Calu3 (cell line): ENCODE measurements at regions of chr5 and their contacts with region 1.

Region 1: DNA sequence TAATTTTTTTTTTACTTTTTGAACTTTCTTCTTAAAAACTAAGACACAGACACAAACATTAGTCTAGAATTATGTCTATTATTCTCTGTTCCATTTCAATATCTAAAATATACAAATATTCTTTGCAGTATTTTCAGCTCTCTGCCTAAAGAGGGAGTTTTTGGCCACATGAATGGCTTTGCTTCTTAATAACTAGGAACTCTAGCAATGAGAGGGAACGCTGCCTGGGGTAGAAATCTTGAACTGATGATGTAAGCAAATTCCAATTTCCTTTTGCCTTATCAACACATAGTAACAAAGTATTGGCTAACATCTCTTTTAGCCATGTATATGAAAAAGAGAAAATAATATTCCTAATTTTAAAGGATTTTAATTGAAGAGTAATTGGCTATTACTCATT is 51.9 kb downstream of the SLC25A46 start:
- DNase-seq: no peak
- H3K4me3 Mint-ChIP-seq: no peak overlapping the region
- H3K27ac Mint-ChIP-seq: no peak overlapping the region
- H3K4me1 Mint-ChIP-seq: no peaks in the 10 kb centered on the region
- H3K27me3 Mint-ChIP-seq: no peaks in the 10 kb centered on the region
- CTCF ChIP-seq: no peak

Region 2: DNA sequence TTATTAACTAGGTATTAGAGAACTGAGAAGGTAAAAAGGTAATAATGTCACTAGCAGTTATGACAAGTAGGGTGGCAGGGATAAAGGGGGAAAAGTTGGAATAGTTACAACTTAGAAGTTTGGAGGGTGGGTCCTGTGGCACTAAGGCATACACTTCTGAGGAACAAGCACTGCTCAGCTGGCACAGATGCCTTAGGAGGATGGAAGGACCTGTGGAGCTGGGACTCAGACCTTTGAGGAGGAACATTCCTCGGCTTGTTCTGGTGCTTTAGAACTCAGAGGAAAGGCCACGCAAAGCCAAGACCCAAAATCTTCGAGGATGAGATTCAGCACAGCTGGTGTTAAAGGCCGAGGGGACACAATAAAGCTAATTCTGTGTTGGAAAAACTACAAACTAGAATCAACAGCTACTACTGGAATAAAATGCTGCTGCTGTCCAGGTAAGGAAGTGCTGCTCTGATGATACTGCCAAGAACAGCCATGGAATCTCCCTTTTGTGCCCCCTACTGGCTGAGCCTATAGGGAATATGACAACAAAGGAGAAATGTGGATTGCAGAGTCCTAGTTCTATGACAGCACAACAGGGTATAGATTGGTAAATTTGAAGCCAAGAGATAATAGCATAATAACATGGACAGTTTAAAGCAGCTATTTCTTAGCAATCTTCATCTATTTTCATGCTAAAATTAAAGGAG is 74.9 kb after region 1 on chr5:
- CTCF ChIA-PET with region 1: no interaction called
- intact Hi-C with region 1: loop called (anchors 2 kb)
- DNase-seq: peak; percentile 63
- H3K4me3 Mint-ChIP-seq: no peak overlapping the region
- H3K27ac Mint-ChIP-seq: no peak overlapping the region
- H3K4me1 Mint-ChIP-seq: no peaks in the 10 kb centered on the region
- H3K27me3 Mint-ChIP-seq: no peaks in the 10 kb centered on the region
- CTCF ChIP-seq: peak; percentile 64